ENCODE measurements at regions of chr21 and their contacts with region 1.

Region 1: DNA sequence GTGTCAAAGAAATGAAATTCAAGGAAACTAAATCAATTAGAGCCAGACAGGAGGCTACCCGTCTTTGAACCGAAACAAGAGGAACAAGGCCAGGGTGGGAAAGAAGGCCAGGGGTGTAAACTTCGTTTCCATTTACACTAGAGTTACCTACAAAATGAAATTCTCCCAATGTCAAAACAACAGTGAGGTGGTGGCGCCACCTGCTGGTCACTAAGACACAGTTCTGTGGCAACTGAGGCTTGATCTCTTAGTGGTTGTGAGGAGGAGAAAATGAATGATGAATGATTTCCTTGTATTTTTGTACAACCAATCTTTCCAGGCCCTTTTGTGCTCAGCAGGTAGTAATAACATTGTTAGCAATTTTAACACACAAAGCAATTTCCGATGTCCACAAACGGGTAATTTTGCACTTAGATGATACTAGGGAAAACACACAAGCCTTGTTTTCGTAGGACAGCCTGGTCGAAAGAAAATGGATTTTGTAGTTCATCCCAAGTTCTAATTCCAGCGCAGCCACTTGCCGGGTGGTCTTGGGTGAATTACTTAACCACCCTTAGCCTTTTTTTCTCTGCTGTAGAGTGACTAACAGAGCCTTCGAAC is 54.8 kb upstream of the SOD1 start:
- DNase-seq: peak; percentile 84
- H3K4me3 Mint-ChIP-seq: no peak overlapping the region
- H3K27ac Mint-ChIP-seq: no peak overlapping the region
- H3K4me1 Mint-ChIP-seq: peaks cover 2% of the 10 kb centered on the region
- H3K27me3 Mint-ChIP-seq: peaks cover 12% of the 10 kb centered on the region

Region 2: GRCh38 chr21:31098576-31099005 is 506.1 kb before region 1 on chr21:
- CTCF ChIA-PET with region 1: interaction called, 28 read pairs
- DNase-seq: peak; percentile 82
- H3K4me3 Mint-ChIP-seq: no peak overlapping the region
- H3K27ac Mint-ChIP-seq: no peak overlapping the region
- H3K4me1 Mint-ChIP-seq: peaks cover 26% of the 10 kb centered on the region
- H3K27me3 Mint-ChIP-seq: peaks cover 5% of the 10 kb centered on the region

Region 3: GRCh38 chr21:31107871-31108270 is 496.8 kb before region 1 on chr21:
- CTCF ChIA-PET with region 1: interaction called, 15 read pairs
- DNase-seq: no peak
- H3K4me3 Mint-ChIP-seq: no peak overlapping the region
- H3K27ac Mint-ChIP-seq: no peak overlapping the region
- H3K4me1 Mint-ChIP-seq: peaks cover 26% of the 10 kb centered on the region
- H3K27me3 Mint-ChIP-seq: no peaks in the 10 kb centered on the region

Region 4: DNA sequence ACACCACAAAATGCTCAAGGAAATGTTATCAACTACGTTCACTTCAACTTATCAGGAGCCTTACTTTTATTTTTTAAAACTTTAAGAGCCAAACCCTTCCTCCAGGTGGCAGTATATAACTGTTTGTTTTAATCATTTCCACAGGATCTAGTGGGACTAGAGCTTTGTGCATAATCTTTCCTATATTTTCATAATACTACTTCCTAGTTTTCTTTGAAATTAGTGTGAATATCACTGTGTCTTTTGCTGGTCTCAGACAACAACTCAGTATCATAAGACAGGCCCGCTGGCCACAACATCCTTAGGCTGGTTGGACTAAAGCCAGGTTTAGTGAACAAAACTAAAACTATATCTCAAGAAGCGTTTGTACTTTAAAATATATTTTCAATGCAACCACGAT is 406.1 kb before region 1 on chr21:
- CTCF ChIA-PET with region 1: interaction called, 26 read pairs
- DNase-seq: no peak
- H3K4me3 Mint-ChIP-seq: no peak overlapping the region
- H3K27ac Mint-ChIP-seq: no peak overlapping the region
- H3K4me1 Mint-ChIP-seq: peaks cover 40% of the 10 kb centered on the region
- H3K27me3 Mint-ChIP-seq: no peaks in the 10 kb centered on the region

Region 5: DNA sequence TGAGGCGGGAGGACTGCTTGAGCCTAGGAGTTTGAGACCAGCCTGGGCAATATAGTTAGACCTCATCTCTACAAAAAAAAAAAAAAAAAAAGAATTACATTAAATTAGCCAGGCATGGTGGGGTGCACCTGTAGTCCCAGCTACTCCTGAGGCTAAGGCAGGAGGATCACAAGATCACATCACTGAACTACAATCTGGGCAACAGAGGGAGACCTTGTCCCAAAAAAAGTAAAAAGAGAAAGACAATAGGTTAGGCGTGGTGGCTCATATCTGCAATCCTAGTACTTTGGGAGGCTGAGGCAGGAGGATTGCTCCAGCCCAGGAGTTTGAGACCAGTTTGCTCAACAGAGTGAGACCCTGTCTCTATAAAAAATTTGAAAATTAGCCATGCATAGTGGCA is 390.9 kb before region 1 on chr21:
- CTCF ChIA-PET with region 1: interaction called, 11 read pairs
- DNase-seq: peak; percentile 23
- H3K4me3 Mint-ChIP-seq: no peak overlapping the region
- H3K27ac Mint-ChIP-seq: no peak overlapping the region
- H3K4me1 Mint-ChIP-seq: no peaks in the 10 kb centered on the region
- H3K27me3 Mint-ChIP-seq: no peaks in the 10 kb centered on the region

Region 6: DNA sequence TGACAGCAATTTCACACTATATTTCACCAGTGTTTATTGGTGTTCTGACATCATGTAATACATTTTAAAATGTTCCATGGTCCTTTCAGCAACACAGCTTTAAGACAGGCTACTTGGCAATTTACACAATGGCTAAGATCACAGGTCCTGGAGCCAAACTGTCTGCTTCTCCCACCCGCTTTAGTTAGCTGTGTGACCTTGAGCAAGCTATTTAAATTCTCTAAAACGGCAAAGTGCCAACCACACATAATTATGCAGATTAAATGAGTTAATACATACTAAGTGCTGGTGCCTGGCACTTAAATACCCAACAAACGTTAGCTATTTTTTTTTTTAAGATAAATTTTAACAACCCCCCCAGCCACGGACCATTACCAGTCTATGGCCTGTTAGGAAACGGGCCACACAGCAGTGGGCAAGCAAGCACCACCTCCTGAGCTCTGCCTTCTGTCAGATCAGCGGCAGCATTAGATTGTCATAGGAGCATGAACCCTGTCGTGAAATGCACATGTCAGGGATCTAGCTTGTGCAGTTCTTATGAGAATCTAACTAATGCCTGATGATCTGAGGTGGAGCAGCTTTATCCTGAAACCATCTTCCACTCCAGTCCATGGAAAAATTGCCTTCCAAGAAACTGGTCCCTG is 81.7 kb after region 1 on chr21:
- CTCF ChIA-PET with region 1: no interaction called
- DNase-seq: no peak
- H3K4me3 Mint-ChIP-seq: no peak overlapping the region
- H3K27ac Mint-ChIP-seq: no peak overlapping the region
- H3K4me1 Mint-ChIP-seq: no peaks in the 10 kb centered on the region
- H3K27me3 Mint-ChIP-seq: no peaks in the 10 kb centered on the region